ENCODE measurements at regions of chrX and their contacts with region 1.

Region 1: DNA sequence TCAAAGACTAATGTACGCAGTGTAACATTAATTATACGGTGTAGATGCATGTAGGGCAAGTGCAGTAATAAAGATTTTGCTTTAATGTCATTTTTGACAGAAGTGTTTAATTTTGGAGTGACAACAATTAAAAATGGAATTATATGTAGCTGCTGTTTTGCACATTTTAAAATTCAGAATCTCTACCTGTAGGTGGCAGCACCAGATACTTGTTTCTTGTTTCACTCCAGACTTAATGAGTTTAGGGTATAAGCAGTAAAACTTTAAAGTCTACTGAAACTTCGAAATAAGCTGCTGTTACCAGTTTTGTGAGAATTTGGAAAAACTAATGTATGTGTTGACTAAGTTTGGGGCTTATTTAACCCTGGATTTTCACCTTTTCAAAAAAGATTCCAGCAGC is 144.9 kb downstream of the POLA1 start:
- DNase-seq: peak in 2 of 9 experiments; percentile 22 to 33
- ATAC-seq: no peak
- H3K4me3 ChIP-seq: no peak overlapping the region
- H3K4me3 Mint-ChIP-seq: no peak overlapping the region
- H3K27ac ChIP-seq: no peak overlapping the region
- H3K27ac Mint-ChIP-seq: no peak overlapping the region
- H3K4me1 ChIP-seq: no peaks in the 10 kb centered on the region
- H3K4me1 Mint-ChIP-seq: no peaks in the 10 kb centered on the region
- H3K27me3 ChIP-seq: no peaks in the 10 kb centered on the region
- H3K27me3 Mint-ChIP-seq: no peaks in the 10 kb centered on the region
- CTCF ChIP-seq: peak; percentile 32

Region 2: GRCh38 chrX:24782011-24782410 is 56.6 kb before region 1 on chrX:
- CTCF ChIA-PET with region 1: no interaction called
- POLR2A ChIA-PET with region 1: no interaction called
- intact Hi-C with region 1: no loop called
- DNase-seq: no peak
- ATAC-seq: no peak
- H3K4me3 ChIP-seq: no peak overlapping the region
- H3K4me3 Mint-ChIP-seq: no peak overlapping the region
- H3K27ac ChIP-seq: no peak overlapping the region
- H3K27ac Mint-ChIP-seq: no peak overlapping the region
- H3K4me1 ChIP-seq: no peaks in the 10 kb centered on the region
- H3K4me1 Mint-ChIP-seq: no peaks in the 10 kb centered on the region
- H3K27me3 ChIP-seq: no peaks in the 10 kb centered on the region
- H3K27me3 Mint-ChIP-seq: no peaks in the 10 kb centered on the region
- CTCF ChIP-seq: no peak

Region 3: DNA sequence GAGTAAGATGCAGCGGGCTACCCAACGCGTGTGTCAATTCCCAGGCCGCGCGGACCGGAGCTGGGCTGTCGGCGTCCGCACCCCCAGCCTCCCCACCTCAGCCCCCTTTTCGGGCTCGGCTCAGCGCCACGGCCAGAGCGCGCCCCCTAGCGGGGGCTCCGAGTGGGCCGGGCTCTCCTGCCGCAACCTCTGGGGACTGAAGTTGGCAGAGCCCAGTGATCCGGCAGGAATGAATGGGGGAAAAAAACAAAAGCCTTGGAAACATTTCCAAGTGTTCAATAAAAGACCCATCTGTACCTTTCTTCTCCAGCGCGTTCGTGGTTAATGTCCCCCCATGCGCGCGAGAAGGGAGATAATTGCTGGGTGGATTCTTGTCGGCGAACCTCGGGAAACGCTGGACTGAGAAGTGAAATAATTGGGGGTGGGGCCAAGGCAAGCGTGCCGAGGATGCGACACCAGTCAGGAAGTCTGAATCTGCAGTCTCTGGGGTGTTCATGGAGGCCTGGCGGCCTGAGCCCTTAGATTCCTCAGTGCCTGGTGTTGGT is 182.3 kb after region 1 on chrX:
- CTCF ChIA-PET with region 1: interaction called, 3 read pairs
- POLR2A ChIA-PET with region 1: no interaction called
- intact Hi-C with region 1: loop called in 1 of 2 experiments (anchors 5 kb)
- DNase-seq: peak in 6 of 9 experiments; percentile 9 to 52 (median 23)
- ATAC-seq: no peak
- H3K4me3 ChIP-seq: no peak overlapping the region
- H3K4me3 Mint-ChIP-seq: peak overlapping the region; percentile 56
- H3K27ac ChIP-seq: no peak overlapping the region
- H3K27ac Mint-ChIP-seq: no peak overlapping the region
- H3K4me1 ChIP-seq: peaks cover 9% of the 10 kb centered on the region
- H3K4me1 Mint-ChIP-seq: peaks cover 32% of the 10 kb centered on the region
- H3K27me3 ChIP-seq: peaks cover 19 to 27% of the 10 kb centered on the region in 2 experiments
- H3K27me3 Mint-ChIP-seq: peaks cover 60% of the 10 kb centered on the region
- CTCF ChIP-seq: peak; percentile 35

Measured in CD8-positive, alpha-beta T cell (primary cell).